H1 (cell line): ENCODE measurements at regions of chr3 and their contacts with region 1.

Region 1: DNA sequence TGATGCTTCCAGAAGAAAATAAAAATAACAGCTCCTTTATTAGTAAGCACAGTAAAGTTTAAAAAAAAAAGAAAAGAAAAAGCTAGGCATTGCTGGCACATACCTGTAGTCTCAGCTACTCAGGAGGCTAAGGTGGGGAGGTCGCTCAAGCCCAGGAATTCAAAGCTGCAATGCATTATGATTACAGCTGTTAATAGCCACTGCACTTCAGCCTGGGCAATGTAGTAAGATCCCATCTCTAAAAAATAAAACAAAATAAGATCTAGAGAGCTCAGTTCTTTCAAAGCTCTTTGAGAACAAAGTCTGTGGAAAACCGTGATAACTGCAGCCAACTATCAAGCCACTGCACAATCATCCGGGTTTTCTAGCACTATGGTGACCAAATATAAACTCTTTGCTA is 212.2 kb downstream of the ZMAT3 start:
- DNase-seq: no peak
- H3K4me3 ChIP-seq: peak overlapping the region in 1 of 4 experiments; percentile 50; a peak in 2 of 8 replicates
- H3K27ac ChIP-seq: no peak overlapping the region
- H3K4me1 ChIP-seq: no peaks in the 10 kb centered on the region; a peak in 1 of 7 replicates
- H3K27me3 ChIP-seq: no peaks in the 10 kb centered on the region
- CTCF ChIP-seq: no peak
- EP300 ChIP-seq: no peak
- POLR2A ChIP-seq: no peak
- RAD21 ChIP-seq: no peak

Region 2: DNA sequence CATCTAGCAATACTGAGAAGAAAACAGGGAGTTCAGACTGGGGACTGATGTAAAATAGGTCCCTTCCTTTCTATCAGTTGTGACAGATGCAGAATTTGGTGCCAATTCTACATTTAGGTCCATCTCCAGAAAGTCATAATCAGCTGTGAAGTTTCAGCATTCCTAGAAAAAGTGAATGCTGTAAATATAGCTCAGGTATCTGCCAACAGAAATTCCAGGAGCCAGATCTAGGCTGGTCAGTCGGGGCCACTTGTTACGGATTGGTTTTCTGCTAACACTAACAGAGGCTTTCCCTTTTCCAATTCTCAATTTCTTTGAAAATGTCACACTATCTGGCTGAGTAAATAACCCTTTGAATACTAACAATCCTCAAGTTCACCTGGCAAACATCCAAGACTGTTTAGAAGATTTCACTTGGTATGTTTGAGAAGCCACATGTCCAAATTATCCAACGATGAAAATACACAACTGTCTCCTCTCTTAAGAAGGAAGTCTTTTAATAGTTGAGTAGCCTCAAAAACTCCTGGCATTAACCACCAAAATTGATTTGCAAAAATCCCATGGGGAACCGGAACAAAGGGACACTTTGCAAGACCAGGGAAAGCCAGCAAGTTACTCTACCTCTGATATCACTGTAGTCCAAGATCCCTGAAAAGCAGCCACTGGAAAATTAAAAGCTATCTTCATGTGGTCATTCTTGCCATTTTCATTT is 10.0 kb before region 1 on chr3:
- CTCF ChIA-PET with region 1: interaction called, 3 read pairs
- POLR2A ChIA-PET with region 1: interaction called, 15 read pairs
- DNase-seq: no peak
- H3K4me3 ChIP-seq: no peak overlapping the region
- H3K27ac ChIP-seq: no peak overlapping the region
- H3K4me1 ChIP-seq: peaks cover 0 to 4% (median 0%) of the 10 kb centered on the region in 4 experiments; a peak in 1 of 7 replicates
- H3K27me3 ChIP-seq: no peaks in the 10 kb centered on the region
- CTCF ChIP-seq: no peak
- EP300 ChIP-seq: no peak
- POLR2A ChIP-seq: no peak
- RAD21 ChIP-seq: no peak

Region 3: DNA sequence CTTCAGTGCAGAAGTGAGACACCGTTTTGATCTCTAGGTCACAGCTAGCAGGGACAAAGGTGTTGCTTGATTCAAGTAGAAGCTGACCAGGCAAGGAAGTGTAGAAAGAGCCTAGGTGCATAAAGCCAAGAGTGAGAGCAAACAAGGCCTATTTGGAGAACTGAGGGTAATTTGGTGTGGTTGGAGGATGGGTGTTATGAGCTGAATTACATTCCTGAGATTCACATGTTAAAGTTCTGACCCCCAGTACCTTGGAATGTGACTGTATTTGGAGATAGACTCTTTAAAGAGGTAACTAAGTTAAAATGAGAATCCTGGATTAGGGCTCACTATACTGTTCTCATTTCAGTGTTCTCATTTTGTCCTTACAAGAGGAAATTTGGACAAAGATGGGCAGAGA is 20.9 kb after region 1 on chr3:
- CTCF ChIA-PET with region 1: no interaction called
- POLR2A ChIA-PET with region 1: interaction called, 14 read pairs
- DNase-seq: no peak
- H3K4me3 ChIP-seq: no peak overlapping the region
- H3K27ac ChIP-seq: 0 out of 2 replicates have a peak overlapping the region, but pooled peaks have one; percentile 5
- H3K4me1 ChIP-seq: peaks cover 0 to 6% (median 3%) of the 10 kb centered on the region in 4 experiments; a peak in 6 of 7 replicates
- H3K27me3 ChIP-seq: no peaks in the 10 kb centered on the region
- CTCF ChIP-seq: no peak
- EP300 ChIP-seq: no peak
- POLR2A ChIP-seq: no peak
- RAD21 ChIP-seq: no peak

Region 4: DNA sequence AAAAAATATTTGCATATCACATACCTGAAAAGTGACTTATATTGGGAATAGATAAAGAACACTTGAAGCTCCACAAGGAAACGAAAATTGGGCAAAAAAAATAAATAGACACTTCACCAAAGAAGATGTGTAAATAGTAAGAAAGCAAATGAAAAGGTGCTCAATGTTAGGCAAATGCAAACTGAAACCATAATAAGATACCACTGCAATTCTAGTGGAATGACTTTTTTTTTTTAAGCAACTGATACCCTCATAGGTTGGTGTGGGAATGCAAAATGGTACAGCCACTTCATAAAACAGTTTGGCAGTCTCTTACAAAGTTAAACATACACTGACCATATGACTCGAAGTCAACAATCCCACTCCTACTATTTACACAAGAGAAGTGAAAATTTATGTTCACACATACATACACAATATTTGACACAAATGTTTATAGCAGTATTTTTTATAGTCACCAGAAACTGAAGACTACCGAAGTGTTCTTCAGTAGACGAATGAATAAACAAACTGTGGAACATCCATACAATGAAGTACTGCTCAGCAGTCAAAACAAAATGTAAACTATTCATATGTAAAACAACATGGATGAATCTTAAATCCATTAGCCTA is 35.9 kb after region 1 on chr3:
- CTCF ChIA-PET with region 1: no interaction called
- POLR2A ChIA-PET with region 1: no interaction called
- DNase-seq: no peak
- H3K4me3 ChIP-seq: no peak overlapping the region
- H3K27ac ChIP-seq: no peak overlapping the region
- H3K4me1 ChIP-seq: no peaks in the 10 kb centered on the region
- H3K27me3 ChIP-seq: no peaks in the 10 kb centered on the region
- CTCF ChIP-seq: no peak
- EP300 ChIP-seq: no peak
- POLR2A ChIP-seq: no peak
- RAD21 ChIP-seq: no peak